PC-3 (cell line): ENCODE measurements at regions of chr12 and their contacts with region 1.

Region 1: DNA sequence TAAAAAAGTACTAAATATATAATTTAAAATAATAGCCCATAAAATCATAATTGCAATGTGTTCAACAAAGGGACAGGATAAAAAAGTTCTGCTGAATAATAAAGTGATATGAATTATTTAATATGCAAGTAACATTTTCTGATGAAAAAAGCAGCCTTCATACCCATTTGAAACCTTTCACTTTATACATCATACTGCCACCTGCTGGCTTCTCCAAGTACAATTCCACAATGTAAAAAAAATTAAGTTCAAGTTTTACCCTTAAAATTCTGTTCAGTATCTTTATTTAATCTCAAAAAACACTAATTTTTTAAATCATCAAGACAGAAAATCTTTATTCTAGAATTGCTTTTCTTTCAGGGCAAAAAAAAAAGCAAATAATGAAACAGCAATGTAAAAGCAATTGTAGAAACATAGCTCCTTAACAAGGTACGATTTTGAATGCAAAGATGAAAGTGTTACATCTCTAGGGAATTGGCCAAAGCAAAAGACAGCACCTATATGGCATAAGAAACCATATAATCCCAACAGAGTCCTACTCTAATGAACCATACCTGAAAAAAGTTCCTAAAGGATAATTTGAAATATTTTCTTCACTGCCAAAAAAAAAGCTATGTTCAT is 15.0 kb downstream of the MDM1 start:
- DNase-seq: peak; percentile 65
- ATAC-seq: no peak
- H3K4me3 ChIP-seq: no peak overlapping the region
- H3K27ac ChIP-seq: no peak overlapping the region
- H3K4me1 ChIP-seq: no peaks in the 10 kb centered on the region
- H3K27me3 ChIP-seq: no peaks in the 10 kb centered on the region
- CTCF ChIP-seq: peak; percentile 76

Region 2: GRCh38 chr12:68040450-68041075 is 276.6 kb before region 1 on chr12:
- CTCF ChIA-PET with region 1: interaction called, 6 read pairs
- POLR2A ChIA-PET with region 1: no interaction called
- intact Hi-C with region 1: loop called (anchors 2 kb)
- DNase-seq: peak; percentile 81
- ATAC-seq: peak; percentile 71
- H3K4me3 ChIP-seq: no peak overlapping the region
- H3K27ac ChIP-seq: no peak overlapping the region
- H3K4me1 ChIP-seq: no peaks in the 10 kb centered on the region
- H3K27me3 ChIP-seq: no peaks in the 10 kb centered on the region
- CTCF ChIP-seq: peak; percentile 95

Region 3: GRCh38 chr12:68210875-68211274 is 106.3 kb before region 1 on chr12:
- CTCF ChIA-PET with region 1: no interaction called
- POLR2A ChIA-PET with region 1: interaction called, 10 read pairs
- intact Hi-C with region 1: no loop called
- DNase-seq: no peak
- ATAC-seq: no peak
- H3K4me3 ChIP-seq: no peak overlapping the region
- H3K27ac ChIP-seq: no peak overlapping the region
- H3K4me1 ChIP-seq: no peaks in the 10 kb centered on the region
- H3K27me3 ChIP-seq: peaks cover 77% of the 10 kb centered on the region
- CTCF ChIP-seq: no peak